Activated CD4-positive, alpha-beta T cell treated with anti-CD3 and anti-CD28 coated beads, Interleukin-2, amount 10 ng/mL, durations not matched to agents 24 days and 14 days (primary cell): ENCODE measurements at regions of chr19 and their contacts with region 1.

Region 1: GRCh38 chr19:7522072-7522922 is at the start of gene MCOLN1:
- DNase-seq: peak; percentile 100
- H3K4me3 Mint-ChIP-seq: peak within 1 kb of the TSS; percentile 81
- H3K27ac Mint-ChIP-seq: peak within 1 kb of the TSS; percentile 87
- H3K4me1 Mint-ChIP-seq: peaks cover 9% of the 10 kb centered on the region
- H3K27me3 Mint-ChIP-seq: peaks cover 12% of the 10 kb centered on the region
- total RNA-seq, gene MCOLN1: 13.3 and 13.7 TPM in 2 replicates

Region 2: DNA sequence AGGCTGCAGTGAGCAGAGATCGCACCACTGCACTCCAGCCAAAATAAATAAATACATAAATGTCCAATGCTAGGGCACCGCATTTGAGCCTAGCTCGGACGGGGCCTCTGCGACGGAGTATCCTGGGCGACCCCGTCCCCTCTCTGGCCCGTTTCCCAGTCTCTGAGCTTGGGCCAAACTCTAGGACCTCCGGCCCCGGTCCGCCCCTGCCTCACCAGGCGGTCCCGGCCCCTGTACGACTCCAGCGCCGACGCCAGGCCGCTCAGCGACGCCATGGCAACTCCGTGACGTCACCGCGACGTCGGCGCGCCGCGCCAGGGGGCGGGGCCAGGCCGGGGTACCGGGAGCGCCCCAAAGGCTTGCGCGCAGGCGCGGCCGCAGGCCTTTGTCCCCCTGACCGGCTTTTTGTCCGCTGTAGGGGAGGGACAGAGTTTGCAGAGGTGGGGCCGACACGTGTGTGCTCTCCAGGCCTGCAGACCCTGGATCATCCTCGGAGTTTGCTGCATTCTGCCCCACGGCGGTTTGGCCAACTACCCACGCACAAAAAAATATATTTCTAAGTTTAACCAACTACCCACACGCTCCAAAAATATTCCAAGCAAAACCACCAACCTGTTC is 33.5 kb before region 1 on chr19 and contains the start of gene PEX11G:
- intact Hi-C with region 1: loop called (anchors 2 kb)
- DNase-seq: peak; percentile 98
- H3K4me3 Mint-ChIP-seq: peak within 1 kb of the TSS; percentile 83
- H3K27ac Mint-ChIP-seq: peak within 1 kb of the TSS; percentile 91
- H3K4me1 Mint-ChIP-seq: peaks cover 26% of the 10 kb centered on the region
- H3K27me3 Mint-ChIP-seq: no peaks in the 10 kb centered on the region
- total RNA-seq, gene PEX11G: 1.1 and 1.2 TPM in 2 replicates